ENCODE measurements at regions of chr9 and their contacts with region 1.

Region 1: DNA sequence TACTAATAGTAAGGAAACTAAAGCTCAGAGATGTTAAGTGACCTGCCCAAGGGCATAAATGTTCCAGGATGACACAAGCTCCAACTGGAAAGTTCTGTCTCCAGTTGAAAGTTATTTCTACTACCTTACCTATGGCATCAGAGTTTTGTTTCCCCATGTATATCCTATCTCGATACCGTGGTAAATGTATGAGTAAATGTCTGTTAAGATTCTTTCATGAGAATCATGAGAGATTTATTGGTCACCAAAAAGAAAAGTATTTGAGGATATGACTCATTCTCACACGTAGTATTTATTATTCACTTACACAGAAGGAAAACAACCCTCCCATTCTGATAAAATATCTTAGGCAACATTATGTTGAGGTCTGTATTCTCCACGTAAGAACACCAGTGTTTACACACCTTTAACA is 11.1 kb upstream of the SHOC1 start:
- DNase-seq: peak in 1 of 2 experiments; percentile 96
- H3K4me3 ChIP-seq: peak overlapping the region; percentile 3; the same call in 1 of the 2 replicates
- H3K27ac ChIP-seq: peak overlapping the region; percentile 93
- H3K4me1 ChIP-seq: peaks cover 35% of the 10 kb centered on the region
- H3K27me3 ChIP-seq: no peaks in the 10 kb centered on the region
- CTCF ChIP-seq: no peak

Region 2: GRCh38 chr9:111411266-111411665 is 394.6 kb before region 1 on chr9:
- CTCF ChIA-PET with region 1: no interaction called
- POLR2A ChIA-PET with region 1: interaction called, 16 read pairs
- intact Hi-C with region 1: no loop called
- DNase-seq: no peak
- H3K4me3 ChIP-seq: no peak overlapping the region
- H3K27ac ChIP-seq: no peak overlapping the region
- H3K4me1 ChIP-seq: no peaks in the 10 kb centered on the region
- H3K27me3 ChIP-seq: no peaks in the 10 kb centered on the region
- CTCF ChIP-seq: no peak

Region 3: DNA sequence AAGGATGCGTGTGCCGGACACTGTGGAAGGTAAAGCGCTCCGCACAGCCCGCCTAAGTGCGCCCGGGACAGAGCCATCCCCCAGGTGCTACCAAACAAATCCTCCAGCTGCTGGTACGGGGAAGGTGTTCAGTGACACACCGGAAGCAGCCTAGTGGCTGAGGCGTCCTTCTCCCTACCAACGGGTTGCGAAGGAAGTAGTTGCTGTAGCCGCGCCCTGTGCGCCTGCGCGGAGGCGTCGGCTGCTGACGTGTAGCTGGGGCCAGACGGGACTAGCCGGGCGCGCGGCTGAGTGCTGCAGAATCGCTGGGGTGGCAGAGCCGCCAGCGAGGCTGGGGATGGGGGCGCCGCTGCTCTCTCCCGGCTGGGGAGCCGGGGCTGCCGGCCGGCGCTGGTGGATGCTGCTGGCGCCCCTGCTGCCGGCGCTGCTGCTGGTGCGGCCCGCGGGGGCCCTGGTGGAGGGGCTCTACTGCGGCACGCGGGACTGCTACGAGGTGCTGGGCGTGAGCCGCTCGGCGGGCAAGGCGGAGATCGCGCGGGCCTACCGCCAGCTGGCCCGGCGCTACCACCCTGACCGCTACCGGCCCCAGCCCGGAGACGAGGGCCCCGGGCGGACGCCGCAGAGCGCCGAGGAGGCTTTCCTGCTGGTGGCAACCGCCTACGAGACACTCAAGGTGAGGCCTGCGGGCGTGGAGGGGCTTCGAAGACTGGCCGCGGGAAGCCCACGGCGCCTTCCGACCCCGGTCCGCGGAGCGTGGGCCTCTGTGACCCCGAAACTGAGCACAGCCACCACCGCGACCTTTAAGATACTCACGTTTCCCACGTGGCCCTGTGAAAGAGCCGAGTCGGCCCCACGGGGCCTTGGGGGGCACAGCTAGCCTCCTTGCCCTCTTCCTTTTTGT is 174.5 kb before region 1 on chr9 and contains the start of gene DNAJC25:
- CTCF ChIA-PET with region 1: no interaction called
- POLR2A ChIA-PET with region 1: no interaction called
- intact Hi-C with region 1: no loop called
- DNase-seq: peak; percentile 97 to 99
- H3K4me3 ChIP-seq: peak within 1 kb of the TSS; percentile 73
- H3K27ac ChIP-seq: peak within 1 kb of the TSS; percentile 63
- H3K4me1 ChIP-seq: peaks cover 23% of the 10 kb centered on the region
- H3K27me3 ChIP-seq: no peaks in the 10 kb centered on the region
- CTCF ChIP-seq: no peak
- total RNA-seq, gene DNAJC25: 7.3 and 7.9 TPM in 2 replicates

Region 4: DNA sequence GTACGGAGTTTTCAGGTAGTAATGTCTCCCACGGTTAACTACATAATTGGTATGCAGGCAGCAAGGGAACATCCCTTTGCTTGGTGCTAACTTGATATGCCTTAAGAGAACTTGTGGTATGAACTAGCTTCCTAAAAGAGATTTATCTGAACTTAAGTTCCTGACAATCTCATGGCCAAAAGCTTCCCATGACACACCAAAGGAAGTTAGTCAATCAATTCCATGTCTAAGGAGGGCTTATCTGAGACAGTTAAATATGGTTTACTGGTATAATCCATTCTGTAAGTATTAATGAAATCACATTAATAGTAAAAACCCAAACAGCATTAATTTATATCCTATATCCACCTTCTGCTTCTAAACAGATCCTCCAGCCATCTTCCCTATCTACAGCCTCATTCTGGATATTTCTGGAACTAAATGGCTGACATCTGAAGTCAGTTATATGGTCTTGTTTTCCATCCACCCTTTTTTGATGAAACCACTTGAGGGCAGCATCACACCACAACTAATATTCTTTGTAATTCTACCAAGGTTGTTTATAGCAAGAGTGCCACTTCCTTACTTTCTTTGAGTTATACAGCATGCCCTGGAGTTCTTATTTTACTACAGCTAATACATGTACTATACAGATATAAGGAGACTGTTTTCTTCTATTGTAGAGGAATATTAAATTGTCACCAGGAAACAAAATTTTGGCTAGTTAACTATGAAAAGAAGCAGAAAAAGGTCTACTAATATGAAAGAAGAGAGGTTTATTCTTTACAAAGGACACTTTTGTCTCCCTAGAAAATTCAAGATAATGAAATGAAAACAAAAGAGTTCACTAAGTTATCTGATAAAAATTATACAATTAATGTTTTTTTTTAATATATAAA is 45.8 kb before region 1 on chr9:
- CTCF ChIA-PET with region 1: no interaction called
- POLR2A ChIA-PET with region 1: no interaction called
- intact Hi-C with region 1: no loop called
- DNase-seq: peak; percentile 53 to 73
- H3K4me3 ChIP-seq: no peak overlapping the region
- H3K27ac ChIP-seq: no peak overlapping the region
- H3K4me1 ChIP-seq: peaks cover 6% of the 10 kb centered on the region; the same call in 1 of the 2 replicates
- H3K27me3 ChIP-seq: no peaks in the 10 kb centered on the region
- CTCF ChIP-seq: peak; percentile 81

Region 5: GRCh38 chr9:111783857-111784256 is 22.0 kb before region 1 on chr9:
- CTCF ChIA-PET with region 1: interaction called, 13 read pairs
- POLR2A ChIA-PET with region 1: no interaction called
- intact Hi-C with region 1: no loop called
- DNase-seq: no peak
- H3K4me3 ChIP-seq: no peak overlapping the region
- H3K27ac ChIP-seq: no peak overlapping the region
- H3K4me1 ChIP-seq: no peaks in the 10 kb centered on the region
- H3K27me3 ChIP-seq: no peaks in the 10 kb centered on the region
- CTCF ChIP-seq: no peak